Posterior vena cava (tissue), 2 donors: ENCODE measurements at regions of chr15 and their contacts with region 1.

Region 1: GRCh38 chr15:32956006-32956405 is 238.2 kb downstream of the GREM1 start:
- DNase-seq: no peak

Region 2: DNA sequence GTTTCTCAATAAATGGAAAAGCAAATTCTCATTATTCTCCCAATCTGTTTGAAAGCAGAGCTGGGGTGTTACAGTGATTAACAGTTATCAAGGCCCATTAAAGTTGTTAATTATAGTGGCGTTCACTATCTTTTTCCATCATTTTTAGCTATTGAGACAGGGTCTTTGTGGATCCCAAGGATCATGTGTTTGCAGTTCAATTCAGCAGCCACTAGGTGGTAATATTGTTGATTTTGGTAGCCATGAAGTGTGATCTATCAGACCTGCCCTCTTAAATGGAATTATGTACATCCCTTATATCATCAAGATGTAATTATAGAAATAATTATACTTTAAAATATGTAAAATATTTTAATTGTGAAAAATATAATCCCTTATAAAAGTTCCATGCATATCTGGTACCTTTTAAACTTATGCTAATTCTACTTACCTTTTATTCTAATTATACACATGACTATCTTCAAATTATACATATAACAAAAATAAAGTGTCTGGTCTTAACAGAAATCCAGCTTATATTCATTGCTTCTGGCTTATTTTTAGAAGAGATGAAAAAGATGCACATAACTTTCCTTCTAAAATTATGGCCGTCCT is 111.8 kb before region 1 on chr15:
- intact Hi-C with region 1: loop called in 1 of 2 experiments (anchors 10 kb)
- DNase-seq: no peak

Region 3: DNA sequence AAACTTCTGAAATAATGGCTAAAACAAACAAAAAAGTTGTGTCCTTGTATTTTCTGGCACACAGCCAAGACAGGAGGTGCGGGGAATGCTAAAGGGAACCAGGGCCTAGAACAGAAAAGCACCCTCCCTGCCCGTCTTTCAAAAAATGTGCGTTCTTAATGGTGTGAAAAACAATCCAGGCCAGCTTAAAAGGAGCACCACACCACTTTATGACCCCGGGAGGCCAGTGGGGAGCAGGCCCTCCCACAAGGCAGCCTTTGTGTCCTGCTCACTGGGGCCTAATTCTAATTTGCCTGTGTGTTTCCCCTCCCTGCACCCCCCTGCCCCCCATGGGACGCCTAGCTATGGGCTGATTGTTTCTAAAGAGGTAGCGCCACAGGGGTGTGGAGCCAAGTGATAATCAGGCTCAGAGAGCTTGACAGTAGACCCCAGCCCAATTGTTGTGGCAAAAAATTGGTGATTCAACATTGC is 56.8 kb before region 1 on chr15:
- intact Hi-C with region 1: no loop called
- DNase-seq: no peak

Region 4: DNA sequence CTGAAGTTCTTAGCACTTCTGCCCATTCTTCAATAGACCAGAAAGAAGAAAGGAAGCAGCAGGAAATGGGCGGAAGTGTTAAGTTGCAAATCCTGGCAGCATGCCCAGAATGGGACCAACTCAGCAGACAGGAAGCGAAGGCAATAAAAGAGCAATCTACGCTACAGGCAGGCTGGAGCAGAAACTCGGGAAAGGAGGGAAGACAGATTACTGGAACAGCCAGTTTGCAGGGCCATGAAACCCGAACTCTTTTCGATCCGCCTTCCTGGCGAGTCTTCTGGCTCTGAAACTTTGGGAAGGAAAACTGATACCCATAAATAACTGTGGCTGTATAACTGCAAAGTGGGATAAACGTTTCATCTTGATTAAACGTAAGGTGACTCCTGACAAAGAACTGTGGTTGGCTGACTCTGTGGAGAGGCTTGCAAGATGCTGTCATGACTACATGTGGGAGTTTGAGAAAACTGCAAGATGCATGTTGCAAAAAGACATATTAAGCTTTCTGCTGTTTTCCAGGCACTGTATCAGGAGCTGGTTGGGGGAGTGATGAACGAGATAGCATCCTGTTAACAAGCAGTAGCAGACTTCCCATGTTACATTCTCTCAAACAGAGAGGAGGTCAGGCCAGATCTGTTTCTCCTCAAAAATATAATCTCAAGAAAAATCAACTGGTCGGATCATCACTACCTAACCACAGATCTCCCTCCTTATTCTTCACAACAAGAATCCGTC is 170.7 kb after region 1 on chr15:
- intact Hi-C with region 1: no loop called
- DNase-seq: peak; percentile 89

Region 5: DNA sequence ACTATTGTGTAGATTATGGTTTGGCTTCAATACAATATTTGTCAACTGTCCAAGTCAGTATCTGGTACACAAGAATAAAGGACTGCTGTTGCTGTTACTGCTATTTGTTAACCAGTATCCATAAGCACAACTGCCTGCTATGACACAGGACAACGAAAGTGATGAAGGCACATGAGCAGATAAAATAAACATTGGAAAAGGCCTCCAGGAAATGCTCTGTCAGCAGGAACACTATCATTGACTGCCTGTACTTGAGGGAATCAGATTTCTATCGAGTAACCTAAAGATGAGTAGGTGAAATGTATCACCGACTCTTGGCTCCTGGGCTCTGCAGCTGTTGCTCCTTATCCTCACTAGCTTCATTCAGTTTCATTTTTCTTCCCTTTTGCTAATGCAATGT is 182.0 kb after region 1 on chr15:
- intact Hi-C with region 1: no loop called
- DNase-seq: no peak